ENCODE measurements at regions of chr7 and their contacts with region 1.

Region 1: DNA sequence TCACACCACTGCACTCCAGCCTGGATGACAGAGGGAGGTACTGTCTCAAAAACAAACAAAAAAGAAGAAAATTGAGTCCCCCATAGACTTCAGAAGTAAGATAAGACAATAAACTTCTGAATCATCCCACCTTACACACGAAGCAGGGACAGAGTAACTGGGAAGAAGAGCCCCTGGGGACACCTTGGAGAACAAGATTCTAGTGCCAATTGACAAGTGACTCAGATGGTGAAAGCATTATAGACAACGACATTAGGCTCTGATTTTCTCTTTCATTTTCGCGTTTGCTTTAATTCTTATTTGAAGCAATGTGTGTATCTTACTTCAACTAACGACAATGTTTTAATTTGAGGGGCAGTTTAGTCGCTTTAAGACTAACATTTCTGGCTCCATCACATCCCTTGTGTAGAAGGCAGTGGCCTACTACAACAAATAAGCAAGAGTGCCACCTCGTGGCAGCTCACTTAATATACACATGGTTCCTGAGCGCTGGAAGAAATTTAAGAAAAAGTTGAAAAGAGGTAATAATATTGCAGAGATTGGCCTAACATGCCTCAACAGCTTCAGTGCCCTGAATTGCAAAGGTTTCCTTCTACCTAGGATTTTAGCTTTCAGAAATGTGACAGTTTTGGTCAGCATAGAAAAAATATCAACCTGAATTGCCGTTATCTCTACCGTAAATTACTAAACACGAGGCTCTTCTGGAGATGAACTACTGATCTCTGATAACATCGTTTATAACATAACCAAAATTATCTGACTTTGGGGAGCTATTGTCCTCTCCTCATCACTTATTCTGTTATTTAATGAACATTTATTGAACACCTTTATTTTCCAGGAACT is 36.7 kb downstream of the ASNS start:
- DNase-seq: peak in 9 of 10 donors; percentile 23 to 93 (median 67)

Region 2: DNA sequence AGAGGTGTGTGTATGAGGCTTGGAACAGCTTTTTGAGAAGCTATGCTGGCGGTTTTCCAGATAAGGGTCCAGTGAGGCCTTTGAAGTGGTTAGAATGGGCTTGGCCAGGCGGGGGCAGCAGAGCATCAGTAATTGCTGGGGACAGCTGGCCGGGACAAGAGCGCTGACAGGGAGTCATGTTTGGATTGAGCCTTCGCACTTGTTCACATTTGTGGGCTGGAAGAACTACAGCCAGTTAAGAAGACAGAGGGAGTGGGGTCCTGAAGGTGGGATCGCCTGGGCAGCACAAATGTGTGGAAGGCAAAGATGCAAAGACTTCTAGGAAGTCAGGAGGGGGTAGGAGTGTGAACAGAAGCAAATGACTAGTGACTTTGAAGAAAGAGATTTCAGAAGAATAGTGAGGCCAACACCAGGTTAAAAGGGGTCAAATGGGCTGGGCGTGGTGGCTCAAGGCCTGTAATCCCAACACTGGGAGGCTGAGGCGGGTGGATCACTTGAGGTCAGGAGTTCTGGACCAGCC is 730.7 kb before region 1 on chr7:
- intact Hi-C with region 1: loop called (anchors 1 kb)
- DNase-seq: peak; percentile 38 to 96 (median 82)

Region 3: DNA sequence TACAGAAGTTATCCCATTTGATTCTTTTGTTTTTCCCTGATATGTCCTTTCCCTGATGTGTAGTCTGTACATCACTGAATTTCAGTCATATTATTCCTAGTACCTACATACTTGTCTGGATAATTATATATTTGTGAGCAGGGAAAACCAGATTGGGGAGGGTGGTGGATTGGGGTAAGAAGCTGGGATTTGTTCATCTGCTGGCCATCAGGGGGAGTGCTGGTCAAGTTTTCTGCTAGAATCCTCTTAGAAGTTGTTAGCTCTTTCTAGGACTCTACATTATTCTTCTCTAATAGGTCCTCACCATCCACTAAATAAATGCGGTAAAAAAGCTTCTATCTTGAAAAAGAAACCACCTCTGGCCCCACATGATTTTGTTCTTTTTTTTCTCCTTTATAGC is 336.3 kb before region 1 on chr7:
- intact Hi-C with region 1: loop called (anchors 1 kb)
- DNase-seq: peak in 2 of 10 donors; percentile 12 to 36

Measured in posterior cingulate gyrus (tissue), 11 donors.